ENCODE measurements at regions of chr10 and their contacts with region 1.

Region 1: GRCh38 chr10:32055813-32056600 is at the start of gene KIF5B:
- DNase-seq: peak; percentile 44
- ATAC-seq: peak; percentile 90
- H3K4me3 ChIP-seq: peak within 1 kb of the TSS; percentile 83
- H3K27ac ChIP-seq: peak within 1 kb of the TSS; percentile 87
- H3K4me1 ChIP-seq: peaks cover 8% of the 10 kb centered on the region
- H3K27me3 ChIP-seq: no peaks in the 10 kb centered on the region
- CTCF ChIP-seq: no peak
- EP300 ChIP-seq: no peak
- POLR2A ChIP-seq: peak; percentile 99
- RAD21 ChIP-seq: no peak
- polyA plus RNA-seq, gene KIF5B: 14.7 to 15.3 TPM

Region 2: GRCh38 chr10:32041290-32042028 is 14.5 kb before region 1 on chr10:
- CTCF ChIA-PET with region 1: interaction called, 3 read pairs
- POLR2A ChIA-PET with region 1: interaction called, 10 read pairs
- RAD21 ChIA-PET with region 1: no interaction called
- SMC1A ChIA-PET with region 1: interaction called, 9 read pairs
- in situ Hi-C with region 1: no loop called
- intact Hi-C with region 1: no loop called
- DNase-seq: no peak
- ATAC-seq: peak; percentile 79
- H3K4me3 ChIP-seq: no peak overlapping the region
- H3K27ac ChIP-seq: no peak overlapping the region
- H3K4me1 ChIP-seq: no peaks in the 10 kb centered on the region
- H3K27me3 ChIP-seq: no peaks in the 10 kb centered on the region
- CTCF ChIP-seq: no peak
- EP300 ChIP-seq: no peak
- POLR2A ChIP-seq: no peak
- RAD21 ChIP-seq: no peak

Measured in GM12878 (cell line).